ENCODE measurements at regions of chr12 and their contacts with region 1.

Region 1: GRCh38 chr12:56117778-56118687 is at the start of gene ZC3H10:
- DNase-seq: peak; percentile 99
- H3K4me3 Mint-ChIP-seq: peak within 1 kb of the TSS; percentile 97
- H3K27ac Mint-ChIP-seq: peak within 1 kb of the TSS; percentile 99
- H3K4me1 Mint-ChIP-seq: peaks cover 23% of the 10 kb centered on the region
- H3K27me3 Mint-ChIP-seq: no peaks in the 10 kb centered on the region
- total RNA-seq, gene ZC3H10: 6.4 to 6.6 TPM

Region 2: DNA sequence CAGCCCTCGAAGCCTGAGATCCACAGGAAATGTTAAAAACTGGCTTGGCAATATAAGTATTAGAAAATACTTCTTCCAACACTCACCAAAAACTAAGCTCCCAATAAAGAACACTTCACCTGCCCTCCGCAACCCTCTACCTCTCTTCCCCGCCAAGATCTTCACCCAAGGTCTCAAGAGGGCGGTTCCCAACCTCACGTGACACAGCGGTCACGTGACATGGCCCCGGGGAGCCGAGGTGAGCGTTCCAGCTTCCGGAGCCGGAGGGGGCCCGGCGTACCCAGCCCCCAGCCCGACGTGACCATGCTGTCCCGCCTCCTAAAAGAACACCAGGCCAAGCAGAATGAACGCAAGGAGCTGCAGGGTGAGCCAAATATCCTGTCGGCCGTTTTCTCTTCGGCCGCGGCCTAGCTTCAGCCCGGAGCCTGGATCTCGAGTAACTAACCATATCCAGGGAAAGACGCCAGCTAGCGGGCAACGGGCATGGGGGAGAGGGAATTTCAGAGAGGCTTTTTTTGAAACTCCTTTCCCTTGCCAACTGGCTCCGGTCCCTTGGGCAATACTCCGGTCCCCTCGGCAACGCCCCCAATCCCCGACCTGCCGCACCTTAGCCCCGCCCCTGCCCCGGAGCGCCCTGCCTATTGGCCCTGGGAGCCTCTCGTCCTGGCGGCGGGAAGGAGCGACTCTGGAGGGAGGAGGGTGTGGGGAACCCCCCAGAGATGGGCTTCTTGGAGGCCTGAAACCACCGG is 402.0 kb before region 1 on chr12 and contains the start of gene BLOC1S1:
- CTCF ChIA-PET with region 1: no interaction called
- intact Hi-C with region 1: loop called (anchors 1 kb)
- DNase-seq: peak; percentile 96
- H3K4me3 Mint-ChIP-seq: peak within 1 kb of the TSS; percentile 92
- H3K27ac Mint-ChIP-seq: peak within 1 kb of the TSS; percentile 91
- H3K4me1 Mint-ChIP-seq: peaks cover 28% of the 10 kb centered on the region
- H3K27me3 Mint-ChIP-seq: peaks cover 3% of the 10 kb centered on the region
- total RNA-seq, gene BLOC1S1: 118 to 124 TPM

Region 3: DNA sequence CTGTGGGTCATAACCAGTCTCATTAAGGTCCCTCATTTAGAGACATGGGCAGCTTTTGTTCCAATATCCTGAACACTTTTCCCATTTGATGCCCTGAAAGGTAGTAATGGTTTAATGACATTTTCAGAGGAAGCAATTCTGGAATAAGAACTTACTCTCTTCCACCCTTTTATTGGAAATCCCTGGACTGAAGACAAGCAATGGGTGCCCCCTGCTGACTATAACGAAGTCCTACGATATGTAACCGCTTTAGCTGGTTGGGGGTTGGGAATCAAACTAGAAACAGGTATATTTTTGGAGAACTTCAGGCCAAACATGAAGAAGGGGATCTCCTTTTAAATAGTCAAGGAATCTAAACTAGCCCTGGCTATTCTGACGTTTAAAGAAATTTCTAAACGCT is 321.0 kb before region 1 on chr12:
- CTCF ChIA-PET with region 1: no interaction called
- intact Hi-C with region 1: no loop called
- DNase-seq: no peak
- H3K4me3 Mint-ChIP-seq: no peak overlapping the region
- H3K27ac Mint-ChIP-seq: no peak overlapping the region
- H3K4me1 Mint-ChIP-seq: peaks cover 3% of the 10 kb centered on the region
- H3K27me3 Mint-ChIP-seq: no peaks in the 10 kb centered on the region

Region 4: GRCh38 chr12:55926738-55927587 is 191.1 kb before region 1 on chr12:
- CTCF ChIA-PET with region 1: interaction called, 3 read pairs
- intact Hi-C with region 1: loop called (anchors 1 kb)
- DNase-seq: peak; percentile 96
- H3K4me3 Mint-ChIP-seq: peak overlapping the region; percentile 99
- H3K27ac Mint-ChIP-seq: peak overlapping the region; percentile 100
- H3K4me1 Mint-ChIP-seq: peaks cover 44% of the 10 kb centered on the region
- H3K27me3 Mint-ChIP-seq: no peaks in the 10 kb centered on the region

Region 5: DNA sequence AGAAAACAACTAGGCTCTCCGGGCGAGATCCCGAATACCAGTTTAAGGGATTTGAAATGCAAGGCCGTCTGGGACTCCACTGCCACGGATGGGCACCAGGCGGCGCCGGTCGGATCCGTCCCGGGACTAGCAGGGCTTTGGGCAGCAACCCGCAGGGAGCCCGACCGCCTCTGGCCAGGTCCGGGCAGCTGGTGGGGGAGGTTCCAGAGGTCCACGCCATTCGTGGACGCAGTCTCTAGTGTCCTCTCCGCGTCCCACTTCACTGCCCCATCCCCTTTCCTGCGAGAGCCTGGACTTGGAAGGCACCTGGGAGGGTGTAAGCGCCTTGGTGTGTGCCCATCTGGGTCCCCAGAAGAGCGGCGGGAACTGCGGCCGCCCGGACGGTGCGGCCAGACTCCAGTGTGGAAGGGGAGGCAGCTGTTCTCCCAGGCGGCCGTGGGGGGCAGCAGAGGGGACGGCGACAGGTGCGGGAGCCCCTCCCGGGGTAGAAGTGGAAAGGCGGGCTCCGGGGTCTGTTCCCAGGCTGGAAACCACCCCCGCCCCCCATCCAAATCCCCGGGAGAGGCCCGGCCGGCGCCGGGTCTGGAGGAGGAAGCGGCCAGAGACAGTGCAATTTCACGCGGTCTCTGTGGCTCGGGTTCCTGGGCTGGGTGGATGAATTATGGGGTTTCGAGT is 38.9 kb before region 1 on chr12:
- CTCF ChIA-PET with region 1: interaction called, 3 read pairs
- intact Hi-C with region 1: loop called (anchors 1 kb)
- DNase-seq: peak; percentile 70
- H3K4me3 Mint-ChIP-seq: peak overlapping the region; percentile 76
- H3K27ac Mint-ChIP-seq: no peak overlapping the region
- H3K4me1 Mint-ChIP-seq: peaks cover 12% of the 10 kb centered on the region
- H3K27me3 Mint-ChIP-seq: peaks cover 17% of the 10 kb centered on the region

Region 6: GRCh38 chr12:56152318-56153033 is 34.4 kb after region 1 on chr12 and contains the start of gene MYL6B:
- CTCF ChIA-PET with region 1: interaction called, 10 read pairs
- intact Hi-C with region 1: loop called (anchors 1 kb)
- DNase-seq: peak; percentile 98
- H3K4me3 Mint-ChIP-seq: peak within 1 kb of the TSS; percentile 84
- H3K27ac Mint-ChIP-seq: peak within 1 kb of the TSS; percentile 98
- H3K4me1 Mint-ChIP-seq: peaks cover 37% of the 10 kb centered on the region
- H3K27me3 Mint-ChIP-seq: no peaks in the 10 kb centered on the region
- total RNA-seq, gene MYL6B: 49.2 to 57.5 TPM

Region 7: DNA sequence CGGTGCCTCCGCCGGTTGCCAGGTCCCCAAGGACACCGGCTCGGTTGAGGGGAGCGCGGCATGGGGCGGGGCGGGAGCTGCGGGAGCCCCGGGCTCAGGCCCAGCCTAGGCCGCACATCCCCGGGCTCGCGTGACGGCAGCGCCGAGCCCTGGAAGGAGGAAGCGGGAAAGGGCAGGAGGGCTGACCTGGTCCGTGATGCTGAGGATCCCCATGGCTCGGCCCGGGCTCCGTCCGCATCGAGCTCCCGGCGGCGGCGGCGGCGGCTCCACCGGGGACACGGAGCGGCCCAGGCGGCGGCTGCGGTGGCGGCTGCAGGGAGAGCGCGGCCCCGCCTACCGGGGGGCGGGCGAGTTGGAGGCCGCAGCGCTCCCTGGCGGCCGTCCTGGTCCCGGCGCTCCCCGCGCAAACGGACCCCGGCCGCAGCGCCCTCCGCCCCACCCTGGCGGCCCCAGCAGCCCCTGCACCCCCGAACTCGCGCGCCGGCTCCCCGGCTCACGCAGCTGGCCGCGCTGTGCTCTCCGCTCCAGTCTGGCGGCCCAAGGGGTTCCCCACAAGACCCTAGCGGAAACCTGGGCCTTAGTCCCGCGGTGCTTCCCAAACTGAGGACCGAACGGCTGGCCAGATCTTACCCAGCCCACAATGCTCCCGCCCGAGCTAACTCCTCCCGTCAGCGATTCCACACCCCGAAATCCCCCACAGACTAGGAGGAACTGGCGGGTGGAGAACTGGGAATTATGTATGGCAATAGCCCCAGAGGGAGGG is 140.2 kb after region 1 on chr12 and contains the start of gene ANKRD52:
- CTCF ChIA-PET with region 1: interaction called, 7 read pairs
- intact Hi-C with region 1: loop called (anchors 2 kb)
- DNase-seq: peak; percentile 72
- H3K4me3 Mint-ChIP-seq: peak within 1 kb of the TSS; percentile 83
- H3K27ac Mint-ChIP-seq: peak within 1 kb of the TSS; percentile 59
- H3K4me1 Mint-ChIP-seq: peaks cover 18% of the 10 kb centered on the region
- H3K27me3 Mint-ChIP-seq: no peaks in the 10 kb centered on the region
- total RNA-seq, gene ANKRD52: 23.6 to 25.6 TPM

Region 8: GRCh38 chr12:56468216-56469006 is 350.4 kb after region 1 on chr12 and contains the start of gene SPRYD4:
- CTCF ChIA-PET with region 1: interaction called, 5 read pairs
- intact Hi-C with region 1: loop called (anchors 2 kb)
- DNase-seq: peak; percentile 95
- H3K4me3 Mint-ChIP-seq: peak within 1 kb of the TSS; percentile 96
- H3K27ac Mint-ChIP-seq: peak within 1 kb of the TSS; percentile 97
- H3K4me1 Mint-ChIP-seq: peaks cover 32% of the 10 kb centered on the region
- H3K27me3 Mint-ChIP-seq: no peaks in the 10 kb centered on the region
- total RNA-seq, gene SPRYD4: 2.2 TPM